A549 (cell line): ENCODE measurements at regions of chr1 and their contacts with region 1.

Region 1: GRCh38 chr1:1281533-1282321 is 1.5 kb downstream of the SCNN1D start:
- DNase-seq: peak in 1 of 2 experiments; percentile 59
- ATAC-seq: peak; percentile 40 to 61
- H3K4me3 ChIP-seq: no peak overlapping the region
- H3K27ac ChIP-seq: peak overlapping the region in 1 of 2 experiments; percentile 10; a peak in 1 of 6 replicates
- H3K4me1 ChIP-seq: peaks cover 8% of the 10 kb centered on the region; the same call in 2 of the 3 replicates
- CTCF ChIP-seq: no peak
- EP300 ChIP-seq: no peak
- POLR2A ChIP-seq: no peak
- RAD21 ChIP-seq: no peak

Region 2: GRCh38 chr1:1291548-1292441 is 10.1 kb after region 1 on chr1:
- CTCF ChIA-PET with region 1: interaction called, 17 read pairs
- POLR2A ChIA-PET with region 1: no interaction called
- DNase-seq: peak in 1 of 2 experiments; percentile 69
- ATAC-seq: peak; percentile 62 to 89; a peak in 5 of 6 replicates
- H3K4me3 ChIP-seq: no peak overlapping the region
- H3K27ac ChIP-seq: no peak overlapping the region
- H3K4me1 ChIP-seq: no peaks in the 10 kb centered on the region
- CTCF ChIP-seq: peak; percentile 37
- EP300 ChIP-seq: no peak
- POLR2A ChIP-seq: no peak
- RAD21 ChIP-seq: peak; percentile 57 to 58